ENCODE measurements at regions of chr10 and their contacts with region 1.

Region 1: DNA sequence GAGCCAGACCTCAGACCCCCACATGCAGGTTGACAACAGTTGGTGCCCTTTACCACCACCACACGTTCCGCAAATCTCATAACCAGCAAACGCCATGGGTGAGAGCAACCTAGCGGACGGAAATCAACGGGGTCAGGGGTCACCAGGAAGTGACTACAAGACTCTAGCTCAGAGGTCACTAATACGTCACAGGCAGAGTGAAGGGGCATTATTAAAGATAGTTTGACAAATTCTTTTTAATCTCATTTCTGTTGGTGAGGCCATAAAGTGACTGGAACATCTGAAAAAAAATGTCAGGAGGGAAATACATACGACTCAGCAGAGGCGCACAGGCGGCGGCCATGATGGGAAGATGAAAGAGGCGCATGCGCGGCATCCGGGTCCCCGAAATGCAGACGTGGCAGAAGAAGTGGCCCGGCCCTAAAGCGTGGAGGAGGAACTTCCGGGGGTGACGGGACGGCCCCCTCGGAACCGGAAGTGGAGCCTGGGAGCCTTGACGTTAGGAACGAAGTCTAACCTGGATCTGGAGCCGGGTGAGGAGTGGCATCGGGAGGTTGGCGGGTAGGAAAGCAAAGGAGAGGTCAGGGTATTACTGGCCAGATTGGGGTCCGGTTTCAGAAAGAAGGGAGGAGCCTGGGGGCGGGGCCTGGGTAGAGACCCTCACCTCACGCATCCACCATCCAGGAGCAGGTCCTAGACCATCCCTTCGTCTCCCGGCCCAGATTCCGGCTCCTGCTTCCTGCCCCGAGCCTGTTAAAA is at the start of gene SEC24C:
- DNase-seq: peak; percentile 86
- ATAC-seq: peak; percentile 95
- H3K4me3 Mint-ChIP-seq: peak within 1 kb of the TSS; percentile 100
- H3K27ac Mint-ChIP-seq: peak within 1 kb of the TSS; percentile 100
- H3K4me1 Mint-ChIP-seq: peaks cover 41% of the 10 kb centered on the region
- H3K27me3 Mint-ChIP-seq: no peaks in the 10 kb centered on the region
- CTCF ChIP-seq: no peak
- total RNA-seq, gene SEC24C: 78.5 and 89.8 TPM in 2 replicates

Region 2: DNA sequence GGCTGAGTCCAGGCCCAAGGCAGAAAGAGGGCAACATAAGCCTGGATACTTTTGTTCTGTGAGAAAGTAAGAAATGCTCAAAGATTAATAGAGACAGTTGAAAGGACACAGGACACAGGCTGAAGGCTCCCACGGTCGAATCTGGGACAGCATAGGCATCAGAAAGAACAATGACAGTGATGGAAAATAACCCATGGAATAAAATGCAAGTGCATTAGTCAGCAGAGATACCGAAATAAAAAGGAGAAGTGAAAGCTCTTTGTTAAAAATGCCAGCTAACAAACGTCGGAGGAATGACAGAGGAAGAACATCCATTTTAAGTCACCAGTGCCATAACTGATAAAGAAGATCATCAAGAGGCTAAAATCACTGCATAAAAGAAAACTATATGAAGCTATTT is 26.5 kb before region 1 on chr10:
- CTCF ChIA-PET with region 1: no interaction called
- POLR2A ChIA-PET with region 1: interaction called, 5 read pairs
- intact Hi-C with region 1: loop called (anchors 1 kb)
- DNase-seq: no peak
- ATAC-seq: peak; percentile 72
- H3K4me3 Mint-ChIP-seq: no peak overlapping the region
- H3K27ac Mint-ChIP-seq: peak overlapping the region; percentile 76
- H3K4me1 Mint-ChIP-seq: peaks cover 12% of the 10 kb centered on the region
- H3K27me3 Mint-ChIP-seq: no peaks in the 10 kb centered on the region
- CTCF ChIP-seq: no peak

Region 3: GRCh38 chr10:73759512-73760115 is 15.5 kb after region 1 on chr10:
- CTCF ChIA-PET with region 1: interaction called, 3 read pairs
- POLR2A ChIA-PET with region 1: interaction called, 15 read pairs
- intact Hi-C with region 1: no loop called
- DNase-seq: no peak
- ATAC-seq: peak; percentile 47
- H3K4me3 Mint-ChIP-seq: peak overlapping the region; percentile 28
- H3K27ac Mint-ChIP-seq: peak overlapping the region; percentile 56
- H3K4me1 Mint-ChIP-seq: peaks cover 20% of the 10 kb centered on the region
- H3K27me3 Mint-ChIP-seq: no peaks in the 10 kb centered on the region
- CTCF ChIP-seq: no peak

Region 4: DNA sequence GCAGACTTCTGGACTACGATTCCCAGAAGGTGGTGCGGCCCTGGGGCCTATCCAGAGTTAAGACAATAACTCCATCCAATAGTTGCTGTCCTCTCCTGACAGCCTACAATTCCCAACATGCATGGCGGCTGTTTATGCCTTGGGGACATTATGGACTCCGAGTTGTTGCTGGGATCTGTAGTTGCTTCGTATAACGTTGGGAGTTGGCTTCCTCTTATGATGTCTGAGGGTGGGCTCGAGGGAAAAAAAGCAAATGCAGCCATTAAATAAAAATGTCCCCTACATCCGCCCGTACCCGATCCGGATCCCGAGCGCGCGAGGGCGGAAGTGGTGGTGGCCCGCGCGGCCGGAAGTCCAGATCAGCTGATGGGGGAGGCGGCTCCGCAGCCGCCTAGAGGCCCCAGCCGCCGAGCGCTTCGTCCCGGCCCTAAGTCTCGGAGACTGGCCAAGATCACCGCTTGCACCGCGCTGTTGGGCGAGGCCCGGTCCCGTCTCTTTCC is 41.2 kb after region 1 on chr10 and contains the start of gene ZSWIM8:
- CTCF ChIA-PET with region 1: no interaction called
- POLR2A ChIA-PET with region 1: interaction called, 14 read pairs
- intact Hi-C with region 1: loop called (anchors 1 kb)
- DNase-seq: peak; percentile 78
- ATAC-seq: peak; percentile 88
- H3K4me3 Mint-ChIP-seq: peak within 1 kb of the TSS; percentile 99
- H3K27ac Mint-ChIP-seq: peak within 1 kb of the TSS; percentile 98
- H3K4me1 Mint-ChIP-seq: peaks cover 57% of the 10 kb centered on the region
- H3K27me3 Mint-ChIP-seq: no peaks in the 10 kb centered on the region
- CTCF ChIP-seq: no peak
- total RNA-seq, gene ZSWIM8: 67.5 and 93.0 TPM in 2 replicates

Region 5: DNA sequence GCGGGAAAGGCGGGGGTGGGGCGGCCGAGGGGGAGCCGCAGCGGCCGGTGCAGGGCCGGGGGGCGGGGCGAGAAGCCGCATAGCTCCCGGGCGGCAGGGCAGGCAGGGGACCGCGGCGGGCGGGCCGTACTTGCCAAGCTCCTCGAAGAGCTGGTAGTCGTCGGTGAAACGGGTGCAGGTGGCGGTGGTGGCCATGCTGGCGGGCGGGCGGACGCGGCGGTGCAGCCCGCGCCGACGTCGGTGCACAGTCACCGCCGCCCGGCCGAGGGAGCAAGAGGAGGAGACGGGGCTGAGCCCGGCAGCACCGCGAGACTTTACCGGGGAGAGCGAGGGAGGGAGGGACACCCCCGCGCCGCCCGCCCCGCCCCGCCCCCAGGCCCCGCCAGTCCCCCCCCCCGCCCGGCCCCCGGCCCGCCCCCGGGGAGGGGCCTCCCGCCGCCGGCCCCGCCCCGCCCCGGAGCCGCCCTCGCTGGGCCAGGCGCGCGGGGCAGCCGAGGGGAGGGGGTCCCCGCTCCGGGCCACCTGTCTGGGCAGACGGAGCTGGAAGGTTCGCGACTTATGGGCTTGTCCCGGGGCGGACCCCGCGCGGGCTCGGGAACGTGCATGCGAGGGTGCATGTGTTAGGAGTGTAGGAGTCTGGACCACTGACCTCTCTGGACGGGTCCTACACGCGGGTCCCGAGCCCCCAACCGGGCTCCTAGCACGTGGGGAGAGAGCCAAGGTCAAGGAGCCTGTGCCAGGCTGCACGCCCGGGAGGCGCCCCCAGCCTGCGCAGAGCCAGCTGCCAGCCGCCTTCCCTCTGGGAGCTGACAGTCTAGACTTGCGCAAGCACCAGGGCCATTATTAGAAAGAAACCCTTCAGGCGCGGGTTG is 130.4 kb after region 1 on chr10 and contains the start of gene CAMK2G:
- CTCF ChIA-PET with region 1: no interaction called
- POLR2A ChIA-PET with region 1: no interaction called
- intact Hi-C with region 1: no loop called
- DNase-seq: peak; percentile 74
- ATAC-seq: peak; percentile 90
- H3K4me3 Mint-ChIP-seq: peak within 1 kb of the TSS; percentile 95
- H3K27ac Mint-ChIP-seq: peak within 1 kb of the TSS; percentile 90
- H3K4me1 Mint-ChIP-seq: peaks cover 37% of the 10 kb centered on the region
- H3K27me3 Mint-ChIP-seq: no peaks in the 10 kb centered on the region
- CTCF ChIP-seq: no peak
- total RNA-seq, gene CAMK2G: 17.8 and 19.9 TPM in 2 replicates